T-cell (primary cell): ENCODE measurements at regions of chr12 and their contacts with region 1.

Region 1: GRCh38 chr12:91577586-91578539 is 395.2 kb upstream of the DCN start:
- DNase-seq: peak in 1 of 35 experiments; percentile 49
- ATAC-seq: peak; percentile 65 to 76 (median 74)
- H3K4me3 ChIP-seq: peak overlapping the region in 1 of 2 donors; percentile 40
- H3K4me3 Mint-ChIP-seq: peak overlapping the region; percentile 66 to 79 (median 78)
- H3K27ac ChIP-seq: no peak overlapping the region
- H3K27ac Mint-ChIP-seq: peak overlapping the region; percentile 67 to 80
- H3K4me1 ChIP-seq: peaks cover 0 to 2% of the 10 kb centered on the region in 2 experiments
- H3K4me1 Mint-ChIP-seq: peaks cover 21 to 32% (median 21%) of the 10 kb centered on the region in 3 donors
- H3K27me3 ChIP-seq: no peaks in the 10 kb centered on the region
- H3K27me3 Mint-ChIP-seq: peaks cover 0 to 2% of the 10 kb centered on the region in 2 donors

Region 2: DNA sequence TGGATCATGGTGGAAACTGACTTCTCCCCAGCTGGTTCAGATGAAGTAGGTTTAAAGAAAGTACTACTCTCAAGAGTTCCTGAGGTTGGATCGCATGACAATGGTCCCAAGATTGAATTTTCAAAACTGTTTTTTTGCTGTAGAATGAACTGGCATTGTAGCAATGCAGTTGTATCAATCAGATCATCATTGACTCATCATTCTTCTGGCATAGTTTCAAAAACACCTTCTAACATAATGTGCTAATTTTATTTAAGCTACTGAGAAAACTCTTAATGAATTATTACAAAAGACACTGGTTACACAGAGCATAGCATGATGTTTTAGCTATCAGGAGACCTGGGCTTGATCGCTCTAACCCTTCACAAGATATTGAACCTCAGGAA is 10.8 kb before region 1 on chr12:
- CTCF ChIA-PET with region 1: interaction called, 4 to 13 read pairs
- POLR2A ChIA-PET with region 1: interaction called, 3 read pairs
- DNase-seq: no peak
- ATAC-seq: no peak
- H3K4me3 ChIP-seq: no peak overlapping the region
- H3K4me3 Mint-ChIP-seq: no peak overlapping the region
- H3K27ac ChIP-seq: no peak overlapping the region
- H3K27ac Mint-ChIP-seq: no peak overlapping the region
- H3K4me1 ChIP-seq: no peaks in the 10 kb centered on the region
- H3K4me1 Mint-ChIP-seq: peaks cover 18 to 27% (median 22%) of the 10 kb centered on the region in 3 donors
- H3K27me3 ChIP-seq: no peaks in the 10 kb centered on the region
- H3K27me3 Mint-ChIP-seq: no peaks in the 10 kb centered on the region